GM12878 (cell line): ENCODE measurements at regions of chr5 and their contacts with region 1.

Region 1: DNA sequence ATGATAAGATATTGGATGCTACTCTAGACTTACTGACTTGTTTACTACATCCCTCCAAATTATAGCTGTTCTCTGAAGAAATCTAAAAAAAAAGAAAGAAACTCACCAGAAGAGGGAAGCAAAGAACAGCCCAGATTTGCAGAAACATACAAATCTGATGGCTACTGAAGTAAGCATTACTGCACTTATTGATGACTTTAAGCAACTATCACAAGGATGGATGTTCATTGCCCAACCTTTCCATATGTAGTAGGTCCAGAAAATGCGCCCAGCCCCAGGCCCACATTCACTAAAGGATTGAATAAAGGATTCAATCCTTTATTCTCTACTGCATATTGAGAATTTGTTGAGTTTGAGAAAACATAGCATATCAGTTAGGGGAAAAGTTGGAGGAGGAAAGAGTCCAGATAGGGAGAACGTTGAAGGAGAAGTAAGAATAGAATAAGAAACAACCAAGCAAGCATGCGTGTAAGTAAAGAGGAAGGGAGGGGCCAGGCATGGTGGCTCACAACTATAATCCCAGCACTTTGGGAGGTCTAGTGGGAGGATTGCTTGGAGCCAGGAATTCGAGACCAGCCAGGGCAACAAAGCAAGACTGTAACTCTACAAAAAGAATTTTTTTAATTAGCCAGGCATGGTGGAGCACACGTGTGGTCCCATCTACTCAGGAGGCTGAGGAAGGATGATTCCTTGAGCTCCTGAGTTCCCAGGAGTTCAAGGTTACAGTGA is 33.8 kb upstream of the DTWD2 start:
- DNase-seq: no peak
- ATAC-seq: peak; percentile 87
- H3K4me3 ChIP-seq: no peak overlapping the region
- H3K27ac ChIP-seq: no peak overlapping the region
- H3K4me1 ChIP-seq: peaks cover 12% of the 10 kb centered on the region; the same call in 1 of the 2 replicates
- H3K27me3 ChIP-seq: no peaks in the 10 kb centered on the region
- CTCF ChIP-seq: peak; percentile 49 to 69 (median 54); a peak in 5 of 6 replicates
- EP300 ChIP-seq: no peak
- POLR2A ChIP-seq: no peak
- RAD21 ChIP-seq: peak; percentile 92

Region 2: DNA sequence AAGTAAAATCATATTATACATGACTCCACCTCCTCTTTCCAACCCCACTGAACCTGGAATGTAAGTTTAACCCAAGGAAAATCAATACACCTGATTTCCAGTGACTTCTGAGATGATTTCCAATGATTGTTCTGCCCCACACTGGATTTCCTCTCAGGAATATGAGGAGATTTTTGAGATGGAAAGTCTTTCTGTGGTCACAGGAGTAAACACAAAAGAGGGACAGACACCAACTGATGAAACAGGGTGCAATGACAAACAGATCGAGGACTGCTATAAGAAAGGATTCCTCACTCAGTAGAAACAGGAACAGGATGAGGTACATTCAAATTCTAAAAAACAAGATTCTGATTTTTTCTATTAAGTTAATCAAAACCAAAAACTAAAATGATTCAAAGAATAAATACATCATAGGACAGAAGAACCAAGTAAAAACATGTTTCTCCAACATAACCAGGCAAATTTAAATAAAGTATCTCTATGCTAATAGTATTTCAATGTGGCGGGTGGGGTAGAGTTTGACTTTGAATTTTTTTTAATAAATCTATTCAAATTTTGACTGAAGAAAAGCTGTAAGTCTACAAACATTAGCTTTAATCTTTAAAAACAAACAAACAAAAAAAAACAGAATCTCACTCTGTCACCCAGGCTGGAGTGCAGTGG is 75.9 kb before region 1 on chr5:
- CTCF ChIA-PET with region 1: no interaction called
- POLR2A ChIA-PET with region 1: no interaction called
- RAD21 ChIA-PET with region 1: no interaction called
- SMC1A ChIA-PET with region 1: no interaction called
- in situ Hi-C with region 1: no loop called
- intact Hi-C with region 1: no loop called
- DNase-seq: no peak
- ATAC-seq: no peak
- H3K4me3 ChIP-seq: no peak overlapping the region
- H3K27ac ChIP-seq: no peak overlapping the region
- H3K4me1 ChIP-seq: no peaks in the 10 kb centered on the region
- H3K27me3 ChIP-seq: no peaks in the 10 kb centered on the region
- CTCF ChIP-seq: no peak
- EP300 ChIP-seq: no peak
- POLR2A ChIP-seq: no peak
- RAD21 ChIP-seq: no peak

Region 3: GRCh38 chr5:119070828-119071572 is 48.8 kb after region 1 on chr5 and contains the start of gene DMXL1:
- CTCF ChIA-PET with region 1: interaction called, 9 read pairs
- POLR2A ChIA-PET with region 1: interaction called, 4 read pairs
- RAD21 ChIA-PET with region 1: interaction called, 12 read pairs
- SMC1A ChIA-PET with region 1: interaction called, 9 read pairs
- in situ Hi-C with region 1: no loop called
- intact Hi-C with region 1: loop called (anchors 2 kb)
- DNase-seq: peak; percentile 99
- ATAC-seq: peak; percentile 84
- H3K4me3 ChIP-seq: peak within 1 kb of the TSS; percentile 79
- H3K27ac ChIP-seq: peak within 1 kb of the TSS; percentile 91
- H3K4me1 ChIP-seq: peaks cover 5% of the 10 kb centered on the region
- H3K27me3 ChIP-seq: no peaks in the 10 kb centered on the region
- CTCF ChIP-seq: no peak
- EP300 ChIP-seq: 0 out of 4 replicates have a peak, but pooled peaks of 1 of the 2 experiments have one; percentile 8
- POLR2A ChIP-seq: peak; percentile 91
- RAD21 ChIP-seq: no peak
- polyA plus RNA-seq, gene DMXL1: 9.1 to 11.0 TPM

Region 4: DNA sequence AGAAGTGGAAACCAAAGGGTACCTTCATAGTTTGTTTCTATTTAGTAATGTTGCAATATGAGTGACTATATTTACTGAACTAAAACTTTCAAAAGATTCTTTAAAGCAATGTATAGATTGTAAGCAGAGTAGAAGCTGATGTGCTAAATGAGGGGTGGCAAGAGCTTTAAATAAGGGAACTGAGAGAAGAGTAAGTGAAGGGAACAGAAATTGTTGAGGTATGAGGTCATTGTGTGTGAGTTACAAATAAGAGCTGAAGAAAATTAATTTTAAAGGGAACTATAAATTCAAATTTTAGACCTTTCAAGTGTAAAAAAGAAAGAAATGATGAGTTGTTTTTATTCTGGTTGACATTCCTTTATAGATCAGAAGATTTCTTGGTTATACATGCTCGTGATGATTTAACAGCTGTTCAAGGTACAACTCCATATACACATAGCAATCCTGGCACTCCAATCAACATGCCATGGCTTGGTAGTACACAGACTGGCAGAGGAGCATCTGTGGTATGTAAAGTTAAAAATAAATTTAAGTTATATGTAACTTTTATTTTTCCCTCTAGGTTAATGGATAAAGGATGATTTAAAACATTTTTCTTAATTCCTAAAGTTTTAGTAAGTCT is 198.5 kb after region 1 on chr5:
- CTCF ChIA-PET with region 1: interaction called, 8 read pairs
- POLR2A ChIA-PET with region 1: no interaction called
- RAD21 ChIA-PET with region 1: interaction called, 7 read pairs
- SMC1A ChIA-PET with region 1: interaction called, 6 read pairs
- in situ Hi-C with region 1: no loop called
- intact Hi-C with region 1: loop called (anchors 10 kb)
- DNase-seq: no peak
- ATAC-seq: peak; percentile 97
- H3K4me3 ChIP-seq: no peak overlapping the region
- H3K27ac ChIP-seq: no peak overlapping the region
- H3K4me1 ChIP-seq: peaks cover 6% of the 10 kb centered on the region; the same call in 1 of the 2 replicates
- H3K27me3 ChIP-seq: no peaks in the 10 kb centered on the region
- CTCF ChIP-seq: no peak
- EP300 ChIP-seq: no peak
- POLR2A ChIP-seq: no peak
- RAD21 ChIP-seq: no peak

Region 5: GRCh38 chr5:119267958-119268386 is 245.8 kb after region 1 on chr5:
- CTCF ChIA-PET with region 1: interaction called, 7 read pairs
- POLR2A ChIA-PET with region 1: no interaction called
- RAD21 ChIA-PET with region 1: interaction called, 5 read pairs
- SMC1A ChIA-PET with region 1: interaction called, 7 read pairs
- in situ Hi-C with region 1: no loop called
- intact Hi-C with region 1: loop called (anchors 5 kb)
- DNase-seq: peak; percentile 81
- ATAC-seq: peak; percentile 81
- H3K4me3 ChIP-seq: peak overlapping the region; percentile 99
- H3K27ac ChIP-seq: peak overlapping the region; percentile 90
- H3K4me1 ChIP-seq: peaks cover 13% of the 10 kb centered on the region
- H3K27me3 ChIP-seq: no peaks in the 10 kb centered on the region
- CTCF ChIP-seq: peak; percentile 63 to 80 (median 68)
- EP300 ChIP-seq: no peak
- POLR2A ChIP-seq: no peak
- RAD21 ChIP-seq: peak; percentile 46; the same call in 1 of the 2 replicates

Region 6: DNA sequence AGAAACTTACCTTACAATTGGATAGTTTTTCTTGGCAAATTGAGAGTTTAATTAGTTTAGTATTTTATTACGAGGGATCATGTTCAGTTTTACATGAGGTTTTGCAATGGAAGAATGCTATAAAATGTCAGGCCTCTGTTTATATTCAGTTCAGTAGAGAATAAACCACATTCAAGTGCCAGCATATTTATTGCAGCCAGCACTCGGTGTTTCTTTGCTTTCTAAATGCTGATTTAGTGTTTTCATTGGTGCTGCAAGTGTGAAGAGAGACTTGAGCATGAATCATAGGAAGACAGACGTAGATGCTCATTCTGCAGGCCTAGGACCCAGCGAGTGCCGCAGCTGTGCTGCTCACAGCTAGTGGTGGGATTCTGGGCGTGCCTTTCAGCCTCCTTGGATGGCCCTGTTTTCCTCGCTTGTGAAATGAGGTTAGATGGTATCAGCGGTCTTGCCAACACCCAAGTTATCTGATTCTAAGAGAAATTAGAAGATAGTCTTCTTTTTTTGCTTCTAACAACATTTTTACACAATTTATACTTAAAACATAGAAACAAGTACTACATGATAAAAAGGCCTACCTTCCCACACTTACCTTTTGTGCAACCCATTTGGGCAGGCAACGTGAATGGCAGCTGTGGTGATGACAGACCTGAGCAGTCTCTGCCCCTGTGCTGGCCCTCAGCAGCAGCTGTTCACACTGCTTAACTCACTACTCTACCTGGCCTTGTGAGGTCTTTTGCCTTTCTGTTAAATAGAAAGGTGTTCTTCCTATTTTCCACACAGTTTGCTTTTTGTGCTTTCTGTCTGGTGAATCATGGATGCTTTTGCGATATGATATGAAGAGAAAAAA is 306.8 kb after region 1 on chr5:
- CTCF ChIA-PET with region 1: no interaction called
- POLR2A ChIA-PET with region 1: no interaction called
- RAD21 ChIA-PET with region 1: no interaction called
- SMC1A ChIA-PET with region 1: no interaction called
- in situ Hi-C with region 1: no loop called
- intact Hi-C with region 1: loop called (anchors 10 kb)
- DNase-seq: no peak
- ATAC-seq: no peak
- H3K4me3 ChIP-seq: no peak overlapping the region
- H3K27ac ChIP-seq: peak overlapping the region; percentile 7; the same call in 1 of the 2 replicates
- H3K4me1 ChIP-seq: peaks cover 48% of the 10 kb centered on the region
- H3K27me3 ChIP-seq: no peaks in the 10 kb centered on the region
- CTCF ChIP-seq: no peak
- EP300 ChIP-seq: no peak
- POLR2A ChIP-seq: no peak
- RAD21 ChIP-seq: no peak